Left lung (tissue), 14 donors: ENCODE measurements at regions of chr14 and their contacts with region 1.

Region 1: GRCh38 chr14:88168498-88169165 is 154.4 kb downstream of the KCNK10 start:
- DNase-seq: peak in 2 of 4 donors; percentile 16 to 38
- ATAC-seq: peak; percentile 96
- H3K4me3 ChIP-seq: no peak overlapping the region
- H3K27ac ChIP-seq: no peak overlapping the region
- H3K4me1 ChIP-seq: no peaks in the 10 kb centered on the region
- H3K27me3 ChIP-seq: no peaks in the 10 kb centered on the region
- CTCF ChIP-seq: peak; percentile 49 to 78

Region 2: DNA sequence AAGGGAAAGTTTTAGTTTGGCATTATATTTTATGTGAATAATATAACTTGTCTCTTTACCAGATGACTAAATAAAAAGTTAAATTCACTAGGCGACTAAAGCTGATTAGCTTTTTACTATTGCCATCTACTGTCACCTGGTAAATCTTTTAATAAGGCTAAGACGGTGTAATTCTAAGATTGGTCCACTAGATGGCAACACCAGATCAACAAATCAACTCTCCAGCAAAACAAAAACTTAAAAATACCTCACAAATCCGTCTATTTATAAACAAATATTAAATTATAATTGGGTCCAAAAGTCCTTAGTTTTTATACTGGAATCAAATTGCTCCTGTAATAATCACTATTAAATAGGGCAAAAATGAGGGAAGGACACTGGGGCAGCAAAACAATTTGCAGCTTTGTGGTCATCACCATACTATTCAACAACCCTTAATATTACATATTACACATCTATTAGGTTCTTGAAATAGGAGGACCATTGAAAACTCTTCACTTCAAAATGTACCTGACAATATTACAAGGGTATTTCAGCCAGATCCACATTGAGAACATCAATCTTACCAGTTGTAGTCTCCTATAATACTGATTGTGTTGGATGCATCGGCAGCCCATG is 223.5 kb before region 1 on chr14:
- intact Hi-C with region 1: loop called in 1 of 2 experiments (anchors 5 kb)
- DNase-seq: peak in 2 of 4 donors; percentile 30 to 50
- ATAC-seq: peak; percentile 77
- H3K4me3 ChIP-seq: no peak overlapping the region
- H3K27ac ChIP-seq: no peak overlapping the region
- H3K4me1 ChIP-seq: no peaks in the 10 kb centered on the region
- H3K27me3 ChIP-seq: no peaks in the 10 kb centered on the region
- CTCF ChIP-seq: peak; percentile 54 to 66

Region 3: DNA sequence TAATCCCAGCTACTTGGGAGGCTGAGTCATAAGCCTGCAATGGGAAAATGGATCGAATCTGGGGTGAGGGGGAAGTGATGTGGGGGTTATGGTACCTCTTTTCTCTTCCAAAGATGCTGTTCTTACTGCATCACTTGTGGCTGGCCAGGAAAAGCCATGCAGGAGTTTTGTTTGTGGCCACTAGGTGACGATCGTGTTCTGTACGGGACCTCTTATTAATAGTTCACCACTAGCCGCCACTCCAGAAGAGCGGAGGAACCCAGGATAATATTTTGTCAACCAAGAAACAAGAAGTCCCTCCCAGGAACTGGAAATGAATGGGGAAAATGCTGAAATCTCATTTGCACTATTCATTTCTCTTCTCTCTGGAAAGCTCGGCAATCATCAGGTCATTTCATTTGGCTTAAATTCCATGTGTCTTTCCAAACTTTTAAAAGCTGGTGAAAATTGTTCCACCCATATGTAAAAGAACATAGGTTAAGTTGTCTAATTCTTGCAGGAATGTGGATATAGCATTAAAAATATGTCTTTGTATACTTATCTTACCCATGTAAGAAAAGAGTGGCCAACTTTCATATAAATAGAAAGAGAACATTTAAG is 154.8 kb before region 1 on chr14:
- intact Hi-C with region 1: loop called in 1 of 2 experiments (anchors 10 kb)
- DNase-seq: peak; percentile 24 to 79 (median 60)
- ATAC-seq: peak; percentile 99
- H3K4me3 ChIP-seq: no peak overlapping the region
- H3K27ac ChIP-seq: no peak overlapping the region
- H3K4me1 ChIP-seq: peaks cover 3 to 47% of the 10 kb centered on the region in 2 donors
- H3K27me3 ChIP-seq: no peaks in the 10 kb centered on the region
- CTCF ChIP-seq: peak; percentile 86 to 96